ENCODE measurements at regions of chr7 and their contacts with region 1.

Region 1: DNA sequence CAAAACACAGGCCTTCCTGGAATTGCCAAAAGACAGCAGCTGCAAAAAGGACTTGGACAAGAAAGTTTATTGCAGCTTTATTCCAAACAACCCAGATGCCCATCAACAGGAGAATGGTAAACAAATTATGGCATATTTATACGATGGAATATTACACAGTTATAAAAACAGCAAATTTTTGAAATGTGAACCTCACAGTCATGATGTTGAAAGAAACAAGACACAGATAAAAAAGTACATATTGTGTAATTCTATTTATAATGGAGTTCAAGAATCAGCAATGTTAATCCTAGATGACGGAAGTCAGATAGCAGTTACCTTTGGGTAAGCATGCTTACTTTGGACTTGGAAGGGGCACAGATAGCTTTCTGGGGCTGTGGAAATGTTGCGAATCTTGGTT is 44.4 kb downstream of the SYPL1 start:
- DNase-seq: no peak
- H3K4me3 ChIP-seq: no peak overlapping the region
- H3K27ac ChIP-seq: no peak overlapping the region
- H3K4me1 ChIP-seq: peaks cover 0 to 46% (median 23%) of the 10 kb centered on the region in 4 donors
- H3K27me3 ChIP-seq: no peaks in the 10 kb centered on the region
- CTCF ChIP-seq: no peak

Region 2: GRCh38 chr7:106112117-106112971 is 44.7 kb after region 1 on chr7 and contains the start of gene SYPL1:
- intact Hi-C with region 1: loop called (anchors 1 kb)
- DNase-seq: peak; percentile 91 to 97
- H3K4me3 ChIP-seq: peak within 1 kb of the TSS; percentile 70 to 75
- H3K27ac ChIP-seq: peak within 1 kb of the TSS; percentile 95 to 99
- H3K4me1 ChIP-seq: peaks cover 0 to 42% (median 12%) of the 10 kb centered on the region in 4 donors
- H3K27me3 ChIP-seq: no peaks in the 10 kb centered on the region
- CTCF ChIP-seq: no peak

Region 3: GRCh38 chr7:106313456-106313901 is 245.8 kb after region 1 on chr7:
- intact Hi-C with region 1: no loop called
- DNase-seq: no peak
- H3K4me3 ChIP-seq: no peak overlapping the region
- H3K27ac ChIP-seq: no peak overlapping the region
- H3K4me1 ChIP-seq: no peaks in the 10 kb centered on the region
- H3K27me3 ChIP-seq: no peaks in the 10 kb centered on the region
- CTCF ChIP-seq: no peak